ENCODE measurements at regions of chr5 and their contacts with region 1.

Region 1: GRCh38 chr5:126309860-126310259 is 113.3 kb upstream of the GRAMD2B start:
- DNase-seq: no peak

Region 2: DNA sequence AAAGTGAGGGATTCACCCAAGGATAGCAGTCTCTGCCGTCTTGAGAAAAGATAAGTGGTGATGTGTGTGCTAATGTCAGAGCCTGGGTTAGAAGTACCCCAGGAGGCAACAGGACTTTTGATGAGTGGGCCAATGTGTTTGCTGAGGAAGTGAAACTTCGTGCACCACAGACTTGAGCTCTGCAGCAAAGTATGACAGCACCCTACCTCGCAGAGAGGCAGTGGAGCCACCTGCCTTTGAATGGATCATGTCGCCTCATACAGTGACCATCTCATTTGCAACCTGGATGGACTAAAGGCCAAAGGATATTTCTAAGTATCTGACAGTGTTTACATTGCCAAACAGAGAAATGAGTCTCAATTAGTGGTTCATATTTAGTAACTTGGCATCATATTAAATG is 480.5 kb before region 1 on chr5:
- intact Hi-C with region 1: no loop called
- DNase-seq: no peak

Region 3: DNA sequence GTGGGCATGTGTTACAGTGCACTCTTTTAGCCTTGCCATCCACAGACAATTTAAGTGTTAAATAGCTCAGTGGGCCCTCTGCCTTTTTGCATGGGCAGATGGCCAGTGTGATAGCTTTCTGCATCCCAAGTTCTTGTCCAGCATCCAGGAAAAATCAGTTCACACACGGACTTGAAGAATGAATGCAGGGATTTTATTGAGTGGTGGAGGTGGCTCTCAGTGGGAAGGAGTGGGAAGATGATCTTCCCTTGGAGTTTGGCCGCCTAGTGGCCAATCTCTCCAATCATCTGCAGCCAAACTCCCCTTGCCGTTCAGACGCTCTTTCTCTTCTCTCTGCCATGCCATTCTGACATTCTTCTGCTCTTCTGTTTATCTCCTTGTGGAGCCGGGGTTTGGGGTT is 209.1 kb before region 1 on chr5:
- intact Hi-C with region 1: loop called (anchors 10 kb)
- DNase-seq: no peak

Region 4: DNA sequence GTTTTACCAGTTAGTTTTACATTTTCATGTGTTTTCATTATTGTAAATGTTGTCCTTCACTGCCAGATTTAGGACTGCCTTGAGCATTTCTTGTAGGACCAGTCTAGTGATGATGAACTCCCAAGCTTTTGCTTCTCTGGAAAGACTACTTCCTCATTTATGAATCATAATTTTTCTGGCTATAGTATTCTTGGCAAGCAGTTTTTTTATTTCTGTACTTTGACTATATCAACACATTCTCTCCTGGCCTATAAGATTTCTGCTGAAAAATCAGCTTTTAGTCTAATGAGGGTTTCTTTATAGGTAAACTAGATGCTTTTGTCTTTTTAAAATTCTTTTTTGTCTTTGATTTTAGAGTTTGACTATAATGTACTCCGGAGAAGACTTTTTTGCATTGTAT is 143.5 kb before region 1 on chr5:
- intact Hi-C with region 1: no loop called
- DNase-seq: no peak

Region 5: DNA sequence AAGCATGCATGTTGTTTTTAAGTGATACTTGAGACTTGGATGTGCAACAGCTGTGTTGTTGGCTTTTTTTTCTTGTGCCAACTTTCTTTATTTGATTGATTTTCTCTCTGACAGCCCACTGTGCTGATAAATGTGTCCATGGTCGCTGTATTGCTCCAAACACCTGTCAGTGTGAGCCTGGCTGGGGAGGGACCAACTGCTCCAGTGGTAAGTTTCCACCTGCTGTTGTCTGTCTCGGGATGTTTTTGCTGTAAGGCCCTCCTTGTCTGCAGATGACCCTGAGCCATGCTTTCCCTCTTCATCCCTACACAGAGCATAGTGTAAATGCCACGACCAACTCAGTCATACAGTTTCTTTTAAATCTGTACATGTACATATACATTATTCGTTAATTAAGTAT is 1059.9 kb after region 1 on chr5:
- intact Hi-C with region 1: no loop called
- DNase-seq: no peak